ENCODE measurements at regions of chr11 and their contacts with region 1.

Region 1: DNA sequence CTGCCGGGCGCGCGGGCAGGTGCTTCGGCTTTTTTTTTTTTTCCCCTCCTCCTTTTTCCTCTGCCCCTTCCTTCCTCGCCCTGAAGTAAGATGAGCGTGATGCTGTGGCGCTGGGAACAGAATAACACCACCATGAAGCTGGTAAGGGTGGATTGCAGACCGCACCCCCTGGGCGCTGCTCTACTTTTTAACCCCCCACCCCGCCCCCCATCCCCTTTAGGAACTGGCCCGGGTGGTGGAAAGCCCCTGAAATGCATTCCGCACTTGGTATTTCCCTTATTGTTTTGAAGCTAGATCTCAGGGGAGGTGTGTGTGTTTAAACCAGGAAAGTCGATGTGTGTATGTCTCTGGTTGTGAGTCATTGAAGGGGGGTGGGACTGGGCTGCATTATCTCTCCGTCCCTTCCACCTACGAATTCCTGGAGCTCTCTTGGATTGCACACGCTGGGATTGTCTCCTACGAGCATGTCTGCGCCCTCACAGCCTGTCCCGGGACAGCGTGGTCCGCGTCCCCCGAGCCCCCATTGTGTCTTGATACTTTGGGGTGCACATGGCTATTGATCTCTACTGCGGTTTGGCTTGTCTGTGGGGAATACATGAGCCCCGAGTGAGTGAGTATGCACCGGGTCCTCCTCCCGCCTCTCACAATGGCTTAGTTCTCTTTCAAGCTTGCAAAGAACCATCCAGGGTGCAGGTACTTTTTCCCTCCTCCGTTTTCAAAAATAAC is 64.9 kb downstream of the NAV2 start:
- DNase-seq: peak; percentile 35 to 70
- H3K4me3 ChIP-seq: peak overlapping the region; percentile 64
- H3K27ac ChIP-seq: peak overlapping the region; percentile 49; the same call in 1 of the 2 replicates
- H3K4me1 ChIP-seq: peaks cover 29% of the 10 kb centered on the region
- H3K27me3 ChIP-seq: no peaks in the 10 kb centered on the region
- CTCF ChIP-seq: no peak

Region 2: GRCh38 chr11:19742588-19743292 is 34.8 kb before region 1 on chr11:
- CTCF ChIA-PET with region 1: interaction called, 3 read pairs
- POLR2A ChIA-PET with region 1: no interaction called
- intact Hi-C with region 1: loop called (anchors 1 kb)
- DNase-seq: peak; percentile 61 to 79
- H3K4me3 ChIP-seq: no peak overlapping the region
- H3K27ac ChIP-seq: no peak overlapping the region
- H3K4me1 ChIP-seq: peaks cover 6% of the 10 kb centered on the region; the same call in 1 of the 2 replicates
- H3K27me3 ChIP-seq: no peaks in the 10 kb centered on the region
- CTCF ChIP-seq: peak; percentile 94

Region 3: DNA sequence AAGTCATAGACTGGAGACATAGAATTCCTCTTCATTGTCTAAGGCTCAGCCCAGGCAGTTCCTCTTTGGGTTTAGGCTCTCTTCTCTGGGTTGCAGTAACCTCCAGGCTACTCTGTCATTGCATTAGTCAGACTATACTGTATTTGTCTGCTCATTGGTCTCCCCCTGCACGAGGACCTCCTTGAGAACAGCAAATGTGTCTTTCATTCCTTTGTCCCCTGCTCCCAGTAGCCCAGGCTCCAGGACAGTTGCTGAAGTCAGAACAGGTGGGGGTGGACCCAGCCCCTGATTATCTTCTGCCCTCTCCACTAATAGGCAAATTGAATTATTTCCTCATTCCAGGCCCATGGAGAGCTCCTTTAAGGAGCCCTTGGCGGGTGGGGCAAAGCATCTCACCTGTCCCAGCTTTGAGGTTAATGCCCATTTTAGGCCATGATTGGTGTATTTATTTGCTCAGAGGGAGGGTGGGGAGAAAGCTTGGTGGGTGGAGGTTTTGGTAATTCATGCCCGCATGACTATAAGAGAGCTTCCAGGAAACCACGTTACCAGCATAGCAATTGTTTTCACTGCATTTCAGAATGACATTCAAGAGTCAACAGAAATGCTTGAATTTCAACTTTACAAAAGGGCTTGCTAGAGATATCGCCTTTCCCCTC is 24.0 kb before region 1 on chr11:
- CTCF ChIA-PET with region 1: no interaction called
- POLR2A ChIA-PET with region 1: interaction called, 13 read pairs
- intact Hi-C with region 1: loop called (anchors 2 kb)
- DNase-seq: peak; percentile 78 to 88
- H3K4me3 ChIP-seq: no peak overlapping the region
- H3K27ac ChIP-seq: peak overlapping the region; percentile 80
- H3K4me1 ChIP-seq: peaks cover 27% of the 10 kb centered on the region
- H3K27me3 ChIP-seq: no peaks in the 10 kb centered on the region
- CTCF ChIP-seq: no peak

Region 4: DNA sequence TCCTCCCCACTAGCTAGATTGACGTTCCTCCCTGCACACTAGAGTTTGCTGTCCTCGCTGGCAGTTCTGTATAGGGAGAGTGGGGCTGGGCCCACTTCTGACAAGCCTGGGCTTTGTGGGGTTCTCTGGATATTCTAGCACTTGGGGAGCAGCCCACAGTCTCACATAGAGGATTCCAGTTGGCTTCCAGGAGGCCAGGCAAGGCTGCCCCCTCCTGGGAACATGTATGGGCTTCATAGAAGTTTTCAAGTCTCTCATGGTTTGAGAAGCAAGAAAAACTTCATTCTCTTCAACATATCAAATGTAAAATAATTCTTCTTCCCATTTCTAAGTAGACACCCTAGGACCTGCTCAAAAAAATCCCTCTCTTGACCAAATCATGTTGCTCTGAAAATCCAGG is 22.6 kb after region 1 on chr11:
- CTCF ChIA-PET with region 1: interaction called, 4 read pairs
- POLR2A ChIA-PET with region 1: interaction called, 16 read pairs
- intact Hi-C with region 1: loop called (anchors 2 kb)
- DNase-seq: no peak
- H3K4me3 ChIP-seq: no peak overlapping the region
- H3K27ac ChIP-seq: peak overlapping the region; percentile 43
- H3K4me1 ChIP-seq: peaks cover 57% of the 10 kb centered on the region
- H3K27me3 ChIP-seq: no peaks in the 10 kb centered on the region
- CTCF ChIP-seq: no peak; the same call in 1 of the 2 replicates

Region 5: GRCh38 chr11:19829109-19829824 is 51.7 kb after region 1 on chr11:
- CTCF ChIA-PET with region 1: no interaction called
- POLR2A ChIA-PET with region 1: interaction called, 25 read pairs
- intact Hi-C with region 1: no loop called
- DNase-seq: peak; percentile 3 to 62
- H3K4me3 ChIP-seq: no peak overlapping the region
- H3K27ac ChIP-seq: peak overlapping the region; percentile 34
- H3K4me1 ChIP-seq: peaks cover 16% of the 10 kb centered on the region
- H3K27me3 ChIP-seq: no peaks in the 10 kb centered on the region
- CTCF ChIP-seq: no peak

Region 6: DNA sequence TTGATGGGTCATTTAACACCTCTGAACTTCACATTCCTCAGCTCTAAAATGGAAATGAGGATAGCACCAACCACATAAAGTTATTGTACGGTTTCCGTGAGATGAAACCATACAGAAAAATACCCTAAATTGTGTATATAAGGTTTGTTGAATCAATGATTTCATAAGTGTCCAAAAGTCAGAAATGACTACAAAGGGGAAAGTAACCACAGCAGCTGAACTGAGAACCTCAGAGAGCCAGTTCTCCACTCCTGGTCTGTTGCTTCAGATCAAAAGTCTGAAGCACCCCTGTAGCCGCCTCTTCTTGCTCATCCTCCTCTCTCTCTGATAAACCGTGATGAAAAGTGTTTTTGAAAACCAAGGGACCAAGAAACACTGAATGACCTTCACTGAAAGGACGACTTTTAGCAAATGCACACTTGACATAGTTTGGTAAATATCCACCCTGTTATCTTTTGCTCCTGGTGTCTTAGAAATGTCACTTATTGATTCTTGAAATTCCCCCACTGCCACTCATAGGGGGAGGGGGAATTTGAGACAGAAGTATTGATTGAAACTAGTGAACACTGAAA is 129.6 kb after region 1 on chr11:
- CTCF ChIA-PET with region 1: no interaction called
- POLR2A ChIA-PET with region 1: no interaction called
- intact Hi-C with region 1: no loop called
- DNase-seq: peak in 1 of 2 experiments; percentile 12
- H3K4me3 ChIP-seq: no peak overlapping the region
- H3K27ac ChIP-seq: no peak overlapping the region
- H3K4me1 ChIP-seq: no peaks in the 10 kb centered on the region
- H3K27me3 ChIP-seq: no peaks in the 10 kb centered on the region
- CTCF ChIP-seq: no peak

Region 7: GRCh38 chr11:20013346-20014066 is 236.0 kb after region 1 on chr11:
- CTCF ChIA-PET with region 1: interaction called, 11 read pairs
- POLR2A ChIA-PET with region 1: no interaction called
- intact Hi-C with region 1: no loop called
- DNase-seq: peak in 1 of 2 experiments; percentile 91
- H3K4me3 ChIP-seq: no peak overlapping the region
- H3K27ac ChIP-seq: peak overlapping the region; percentile 35
- H3K4me1 ChIP-seq: peaks cover 37% of the 10 kb centered on the region
- H3K27me3 ChIP-seq: no peaks in the 10 kb centered on the region
- CTCF ChIP-seq: no peak

Measured in PC-9 (cell line).